Spleen (tissue), 13 donors: ENCODE measurements at regions of chr10 and their contacts with region 1.

Region 1: GRCh38 chr10:113385021-113385999 is 167.5 kb upstream of the HABP2 start:
- DNase-seq: peak; percentile 86
- H3K4me3 ChIP-seq: peak overlapping the region in 1 of 8 donors; percentile 17
- H3K27ac ChIP-seq: no peak overlapping the region
- H3K4me1 ChIP-seq: peaks cover 0 to 45% (median 32%) of the 10 kb centered on the region in 6 donors
- H3K27me3 ChIP-seq: no peaks in the 10 kb centered on the region
- CTCF ChIP-seq: peak; percentile 59 to 86 (median 75)
- POLR2A ChIP-seq: no peak

Region 2: DNA sequence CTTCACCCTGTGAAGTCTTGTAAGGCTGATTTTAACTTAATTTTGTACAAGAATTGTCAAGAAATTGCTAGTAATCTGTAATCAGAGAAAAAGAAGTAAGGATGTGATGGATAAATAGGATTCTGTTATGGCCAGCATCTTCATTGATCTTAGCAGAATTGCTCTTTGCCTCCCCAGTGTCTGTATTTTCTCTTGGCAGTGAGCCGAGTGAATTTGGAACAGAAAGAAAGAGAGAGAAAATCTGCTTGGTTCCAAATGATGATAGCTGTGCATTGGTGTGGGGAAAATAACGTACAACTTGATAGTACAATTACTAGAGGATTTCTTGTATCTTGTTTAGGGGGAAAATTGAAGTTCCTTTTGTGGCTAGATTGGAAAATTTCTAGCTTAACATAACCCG is 903.7 kb before region 1 on chr10:
- intact Hi-C with region 1: loop called (anchors 5 kb)
- DNase-seq: no peak
- H3K4me3 ChIP-seq: no peak overlapping the region
- H3K27ac ChIP-seq: no peak overlapping the region
- H3K4me1 ChIP-seq: peaks cover 0 to 10% (median 0%) of the 10 kb centered on the region in 6 donors
- H3K27me3 ChIP-seq: no peaks in the 10 kb centered on the region
- CTCF ChIP-seq: no peak
- POLR2A ChIP-seq: no peak

Region 3: DNA sequence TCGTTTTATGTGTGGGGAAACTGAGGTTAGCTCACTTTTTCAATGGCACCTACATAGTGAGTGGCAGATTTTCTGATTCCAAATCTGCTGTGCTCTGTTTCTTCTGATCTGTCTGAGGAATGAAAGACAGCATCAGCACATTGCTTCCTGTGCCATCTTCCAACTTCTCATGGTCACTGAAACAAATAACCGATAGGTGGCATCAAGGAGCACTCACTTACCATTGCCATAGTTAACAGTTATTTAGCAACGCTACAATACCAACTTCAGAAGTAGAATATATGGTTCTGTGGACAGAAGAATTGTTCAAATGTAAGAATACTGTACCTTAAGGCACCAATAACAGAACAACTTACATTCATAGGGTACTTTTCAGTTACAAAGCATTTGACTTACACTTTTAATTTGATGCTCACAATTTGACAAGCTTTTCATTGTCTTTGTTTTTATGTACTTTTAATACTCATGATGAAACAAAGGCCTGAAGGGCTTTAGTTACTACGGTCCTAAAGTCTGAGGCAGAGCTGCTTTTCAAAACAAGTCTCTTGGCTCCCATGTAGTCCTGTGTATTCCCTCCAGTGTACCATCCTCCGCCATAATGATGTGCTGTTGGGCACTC is 664.1 kb before region 1 on chr10:
- intact Hi-C with region 1: loop called (anchors 5 kb)
- DNase-seq: no peak
- H3K4me3 ChIP-seq: no peak overlapping the region
- H3K27ac ChIP-seq: no peak overlapping the region
- H3K4me1 ChIP-seq: no peaks in the 10 kb centered on the region
- H3K27me3 ChIP-seq: no peaks in the 10 kb centered on the region
- CTCF ChIP-seq: peak in 10 of 11 experiments; percentile 29 to 71 (median 56)
- POLR2A ChIP-seq: no peak

Region 4: DNA sequence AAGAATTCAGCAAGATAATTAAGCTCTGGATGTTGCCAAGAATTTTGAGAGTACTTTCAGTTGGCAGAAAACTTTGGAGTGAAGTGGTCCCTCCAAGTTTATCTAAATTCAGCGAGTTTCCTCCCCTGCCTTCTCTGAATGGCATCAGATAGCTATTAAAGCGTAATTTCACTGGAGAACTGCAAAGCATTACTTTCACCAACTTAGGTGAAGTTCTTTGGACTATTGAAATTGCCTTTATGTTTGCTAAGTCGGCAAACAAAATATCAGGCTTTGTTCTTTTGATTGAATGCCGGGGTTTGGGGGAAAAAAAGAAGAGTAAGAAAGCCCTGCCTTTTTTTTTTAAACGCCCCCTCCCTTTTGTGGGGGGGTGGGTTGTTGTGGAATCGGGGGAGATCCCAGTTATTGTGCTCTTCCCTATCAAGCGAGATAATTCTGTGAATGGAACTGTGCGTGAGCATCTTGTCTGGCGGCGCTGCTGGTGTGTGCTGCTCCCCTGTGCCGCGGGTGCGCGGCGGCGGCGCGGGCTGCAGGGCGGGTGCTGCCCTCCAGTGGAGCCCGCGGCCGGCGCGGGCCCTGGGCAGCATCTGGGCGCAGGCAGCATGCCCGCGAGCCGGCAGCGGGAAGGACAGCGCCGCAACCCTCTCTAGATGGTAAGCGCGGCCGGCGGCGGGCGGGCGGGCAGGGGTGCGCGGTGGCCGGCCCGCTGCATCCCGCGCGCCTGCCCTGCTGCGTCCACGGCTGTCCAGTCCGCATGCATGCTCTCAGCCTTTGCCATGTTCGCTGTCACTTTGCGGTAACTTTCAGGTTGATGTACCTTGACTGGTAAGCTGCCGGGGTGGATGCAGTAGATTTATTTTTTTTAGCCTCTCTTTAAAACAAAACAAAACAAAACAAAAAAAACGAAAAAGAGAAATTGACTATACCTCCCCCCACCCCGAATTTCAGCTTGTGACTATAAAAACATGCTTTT is 258.8 kb before region 1 on chr10:
- intact Hi-C with region 1: loop called (anchors 10 kb)
- DNase-seq: peak; percentile 87
- H3K4me3 ChIP-seq: peak overlapping the region in 5 of 8 donors; percentile 16 to 62 (median 32)
- H3K27ac ChIP-seq: peak overlapping the region in 3 of 8 donors; percentile 30 to 67 (median 34)
- H3K4me1 ChIP-seq: peaks cover 0 to 53% (median 25%) of the 10 kb centered on the region in 6 donors
- H3K27me3 ChIP-seq: peaks cover 0 to 27% (median 0%) of the 10 kb centered on the region in 7 donors
- CTCF ChIP-seq: peak in 7 of 11 experiments; percentile 8 to 79 (median 66)
- POLR2A ChIP-seq: no peak

Region 5: GRCh38 chr10:113139699-113140098 is 245.6 kb before region 1 on chr10:
- intact Hi-C with region 1: no loop called
- DNase-seq: no peak
- H3K4me3 ChIP-seq: no peak overlapping the region
- H3K27ac ChIP-seq: no peak overlapping the region
- H3K4me1 ChIP-seq: peaks cover 0 to 25% (median 0%) of the 10 kb centered on the region in 6 donors
- H3K27me3 ChIP-seq: no peaks in the 10 kb centered on the region
- CTCF ChIP-seq: peak in 1 of 11 experiments; percentile 20
- POLR2A ChIP-seq: no peak